Heart right ventricle (tissue), 16 donors: ENCODE measurements at regions of chr2 and their contacts with region 1.

Region 1: DNA sequence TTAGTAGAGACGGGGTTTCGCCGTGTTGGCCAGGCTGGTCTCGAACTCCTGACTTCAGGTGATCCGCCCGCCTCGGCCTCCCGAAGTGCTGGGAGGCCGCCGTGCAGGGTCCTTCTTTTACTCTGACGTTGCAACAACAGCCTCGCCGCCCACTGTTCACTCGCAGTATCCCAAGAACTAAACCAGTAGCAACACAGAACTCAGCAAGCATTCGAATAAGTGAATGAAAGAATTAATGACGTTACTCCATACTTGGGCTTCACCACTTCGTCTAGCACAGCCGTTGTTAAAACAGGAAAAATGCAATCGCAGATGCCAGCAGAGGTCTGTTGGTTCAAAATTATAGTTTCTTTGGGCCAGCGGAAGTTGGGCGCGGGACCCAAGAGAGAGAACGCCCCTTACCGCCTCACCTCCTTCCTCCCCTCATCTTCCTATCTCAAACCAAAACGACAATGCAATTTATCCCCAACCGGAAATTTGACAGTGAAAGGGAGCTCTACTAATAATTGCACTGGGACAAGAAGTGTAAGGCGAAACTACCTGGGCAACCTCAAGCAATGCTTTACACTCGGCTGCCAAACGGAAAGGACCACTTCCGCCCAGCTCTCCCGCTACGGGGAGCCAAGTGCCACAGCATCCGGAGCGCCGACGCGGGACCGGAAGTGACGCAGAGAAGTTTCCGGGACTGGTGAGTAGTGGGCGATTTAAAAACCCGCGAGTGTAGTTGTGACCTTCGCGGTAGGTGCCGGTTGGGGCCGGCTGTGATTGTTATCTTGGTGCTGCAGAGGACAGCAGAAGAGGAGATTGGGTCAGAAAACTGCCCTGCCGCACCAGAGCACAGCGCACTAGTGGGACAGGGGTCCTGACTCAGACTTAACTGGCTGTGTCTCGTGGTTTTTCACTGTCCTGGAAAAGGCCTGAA is at the starts of genes NIF3L1 and PPIL3:
- DNase-seq: peak; percentile 94 to 96
- ATAC-seq: peak; percentile 96 to 98 (median 97)
- H3K4me3 ChIP-seq: peak within 1 kb of the TSS; percentile 61 to 93 (median 78)
- H3K27ac ChIP-seq: peak within 1 kb of the TSS; percentile 72 to 97 (median 92)
- H3K4me1 ChIP-seq: peaks cover 0 to 28% (median 22%) of the 10 kb centered on the region in 9 donors
- H3K27me3 ChIP-seq: no peaks in the 10 kb centered on the region
- CTCF ChIP-seq: peak in 1 of 9 donors; percentile 1
- total RNA-seq, gene NIF3L1: 14.2 to 24.5 (median 20.7) TPM
- total RNA-seq, gene PPIL3: 14.2 to 33.1 (median 24.1) TPM

Region 2: DNA sequence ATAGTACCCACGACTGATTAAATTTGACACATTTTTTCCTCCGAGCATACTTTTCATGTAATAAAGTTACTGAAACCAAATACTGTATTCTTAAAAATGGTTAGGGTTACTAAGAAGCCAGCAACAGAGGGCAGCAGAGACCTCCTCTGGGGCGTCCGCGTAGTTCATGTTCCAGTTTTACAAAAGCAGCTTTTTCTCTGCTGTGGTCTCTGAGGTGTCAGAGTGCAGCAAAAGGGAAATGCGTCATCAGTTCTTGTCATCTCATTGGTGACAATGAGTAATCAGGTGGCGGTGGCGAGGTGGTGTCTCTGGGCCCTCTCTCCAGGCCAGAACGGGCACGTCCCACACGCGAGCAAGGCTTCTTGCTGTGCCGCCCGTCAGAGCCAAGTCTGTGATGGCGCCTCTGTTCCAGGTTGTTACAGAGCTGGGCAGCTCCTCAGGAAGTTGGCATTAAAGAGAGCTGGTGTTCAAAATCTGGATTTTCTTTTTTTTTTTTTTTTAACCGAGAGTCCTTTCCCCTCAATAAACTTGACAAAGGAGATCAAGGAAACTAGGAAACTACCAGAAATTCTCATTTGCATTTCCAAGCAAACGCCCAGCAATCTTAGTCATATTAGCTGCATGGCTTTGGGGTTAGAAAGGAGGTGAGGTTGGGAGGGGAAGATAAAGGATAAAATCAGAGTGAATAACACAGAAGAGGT is 175.8 kb before region 1 on chr2:
- intact Hi-C with region 1: loop called in 1 of 10 experiments (anchors 1 kb)
- DNase-seq: peak; percentile 75 to 87
- ATAC-seq: peak; percentile 95 to 98 (median 98)
- H3K4me3 ChIP-seq: peak overlapping the region in 9 of 10 donors; percentile 10 to 56 (median 40)
- H3K27ac ChIP-seq: peak overlapping the region in 9 of 10 donors; percentile 22 to 87 (median 63)
- H3K4me1 ChIP-seq: peaks cover 0 to 11% (median 0%) of the 10 kb centered on the region in 9 donors
- H3K27me3 ChIP-seq: peaks cover 0 to 4% (median 0%) of the 10 kb centered on the region in 7 donors
- CTCF ChIP-seq: peak; percentile 69 to 94 (median 87)

Region 3: GRCh38 chr2:200864176-200864976 is 24.6 kb before region 1 on chr2 and contains the start of gene CLK1:
- intact Hi-C with region 1: loop called in 2 of 10 experiments (anchors 2 kb)
- DNase-seq: peak; percentile 98 to 99
- ATAC-seq: peak; percentile 94 to 97 (median 96)
- H3K4me3 ChIP-seq: peak within 1 kb of the TSS; percentile 73 to 98 (median 90)
- H3K27ac ChIP-seq: peak within 1 kb of the TSS; percentile 99 to 100 (median 100)
- H3K4me1 ChIP-seq: peaks cover 3 to 51% (median 34%) of the 10 kb centered on the region in 9 donors
- H3K27me3 ChIP-seq: no peaks in the 10 kb centered on the region
- CTCF ChIP-seq: no peak
- total RNA-seq, gene CLK1: 30.8 to 59.6 (median 45.3) TPM

Region 4: DNA sequence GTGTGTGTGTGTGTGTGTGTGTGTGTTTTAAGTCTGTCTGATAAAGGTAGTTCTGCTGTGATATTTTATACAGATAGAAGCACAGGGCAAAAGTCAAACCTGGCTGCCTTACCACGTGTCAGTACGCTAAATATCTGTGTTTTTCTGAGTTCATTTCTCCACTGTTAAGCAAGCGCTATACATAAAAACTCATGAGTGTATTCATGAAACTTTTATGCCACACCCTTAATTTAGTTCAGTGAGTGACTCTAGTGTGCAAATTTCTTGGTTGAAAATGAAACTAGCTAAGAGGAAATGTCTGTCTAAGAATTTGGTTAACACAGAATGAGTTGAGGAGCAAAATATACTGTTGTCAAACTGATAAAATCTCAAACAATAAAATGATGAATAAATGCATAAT is 305.1 kb after region 1 on chr2:
- intact Hi-C with region 1: no loop called
- DNase-seq: no peak
- ATAC-seq: no peak
- H3K4me3 ChIP-seq: no peak overlapping the region
- H3K27ac ChIP-seq: peak overlapping the region in 5 of 10 donors; percentile 6 to 79 (median 54)
- H3K4me1 ChIP-seq: peaks cover 0 to 81% (median 43%) of the 10 kb centered on the region in 9 donors
- H3K27me3 ChIP-seq: no peaks in the 10 kb centered on the region
- CTCF ChIP-seq: no peak